Activated CD8-positive, alpha-beta T cell treated with anti-CD3 and anti-CD28 coated beads for 36 hours (primary cell): ENCODE measurements at regions of chr14 and their contacts with region 1.

Region 1: GRCh38 chr14:91029456-91030217 is 30.8 kb downstream of the RPS6KA5 start:
- DNase-seq: no peak
- ATAC-seq: peak; percentile 74
- H3K4me3 Mint-ChIP-seq: no peak overlapping the region
- H3K27ac Mint-ChIP-seq: peak overlapping the region; percentile 7
- H3K4me1 Mint-ChIP-seq: peaks cover 51% of the 10 kb centered on the region
- H3K27me3 Mint-ChIP-seq: no peaks in the 10 kb centered on the region
- CTCF ChIP-seq: no peak

Region 2: GRCh38 chr14:90785471-90785870 is 244.2 kb before region 1 on chr14:
- CTCF ChIA-PET with region 1: no interaction called
- POLR2A ChIA-PET with region 1: no interaction called
- intact Hi-C with region 1: no loop called
- DNase-seq: no peak
- ATAC-seq: no peak
- H3K4me3 Mint-ChIP-seq: no peak overlapping the region
- H3K27ac Mint-ChIP-seq: no peak overlapping the region
- H3K4me1 Mint-ChIP-seq: no peaks in the 10 kb centered on the region
- H3K27me3 Mint-ChIP-seq: no peaks in the 10 kb centered on the region
- CTCF ChIP-seq: no peak

Region 3: GRCh38 chr14:91041450-91041849 is 11.8 kb after region 1 on chr14:
- CTCF ChIA-PET with region 1: interaction called, 11 read pairs
- POLR2A ChIA-PET with region 1: interaction called, 3 read pairs
- intact Hi-C with region 1: no loop called
- DNase-seq: no peak
- ATAC-seq: no peak
- H3K4me3 Mint-ChIP-seq: no peak overlapping the region
- H3K27ac Mint-ChIP-seq: no peak overlapping the region
- H3K4me1 Mint-ChIP-seq: peaks cover 43% of the 10 kb centered on the region
- H3K27me3 Mint-ChIP-seq: no peaks in the 10 kb centered on the region
- CTCF ChIP-seq: no peak